H1 (cell line): ENCODE measurements at regions of chr11 and their contacts with region 1.

Region 1: DNA sequence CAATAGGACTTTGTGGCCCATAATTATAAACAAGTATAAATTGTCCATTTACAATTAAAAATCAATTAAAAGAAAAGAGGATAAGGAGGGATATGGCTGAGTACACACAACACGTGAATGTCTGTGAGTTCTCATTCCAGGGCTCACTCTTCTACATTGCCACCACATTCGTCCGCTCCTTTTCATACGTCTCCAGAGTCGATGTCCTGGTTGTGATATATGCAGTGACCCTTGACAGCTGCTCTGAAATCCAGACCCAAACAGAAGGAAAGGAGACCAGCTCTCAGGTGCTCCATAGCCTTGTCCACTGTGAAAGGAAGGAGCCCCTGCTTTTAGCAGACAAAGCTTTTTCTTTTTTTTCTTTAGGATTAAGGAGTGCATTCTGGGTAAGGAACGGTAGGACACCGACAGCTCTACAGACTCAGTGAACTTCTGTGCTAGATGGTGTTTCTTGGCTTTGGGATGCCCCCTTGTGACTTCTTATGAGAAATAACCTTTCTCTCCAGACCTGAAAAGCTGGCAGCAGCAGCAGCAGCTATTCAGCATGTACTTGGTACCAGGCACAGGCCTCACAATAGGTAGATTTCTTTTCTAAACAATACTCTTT is 19.7 kb upstream of the DNAJB13 start:
- DNase-seq: peak; percentile 52 to 53
- H3K4me3 ChIP-seq: no peak overlapping the region
- H3K27ac ChIP-seq: no peak overlapping the region
- H3K4me1 ChIP-seq: peaks cover 0 to 3% (median 1%) of the 10 kb centered on the region in 4 experiments; a peak in 3 of 7 replicates
- H3K27me3 ChIP-seq: no peaks in the 10 kb centered on the region
- CTCF ChIP-seq: peak in 2 of 3 experiments; percentile 81 to 82; a peak in 3 of 4 replicates
- EP300 ChIP-seq: 0 out of 3 replicates have a peak, but pooled peaks of 1 of the 2 experiments have one; percentile 20
- POLR2A ChIP-seq: no peak
- RAD21 ChIP-seq: peak; percentile 92 to 96

Region 2: GRCh38 chr11:73760679-73761402 is 170.3 kb before region 1 on chr11 and contains the start of gene RAB6A:
- CTCF ChIA-PET with region 1: interaction called, 15 read pairs
- POLR2A ChIA-PET with region 1: interaction called, 3 read pairs
- DNase-seq: peak; percentile 100
- H3K4me3 ChIP-seq: peak within 1 kb of the TSS; percentile 92 to 95 (median 94)
- H3K27ac ChIP-seq: peak within 1 kb of the TSS; percentile 82; the same call in 1 of the 2 replicates
- H3K4me1 ChIP-seq: peaks cover 0 to 4% (median 0%) of the 10 kb centered on the region in 4 experiments; a peak in 1 of 7 replicates
- H3K27me3 ChIP-seq: no peaks in the 10 kb centered on the region
- CTCF ChIP-seq: peak; percentile 49 to 57 (median 54)
- EP300 ChIP-seq: no peak; a peak in 1 of 3 replicates
- POLR2A ChIP-seq: peak; percentile 58 to 76
- RAD21 ChIP-seq: peak; percentile 43 to 51; a peak in 3 of 4 replicates
- total RNA-seq, gene RAB6A: 88.6 and 89.3 TPM in 2 replicates

Region 3: DNA sequence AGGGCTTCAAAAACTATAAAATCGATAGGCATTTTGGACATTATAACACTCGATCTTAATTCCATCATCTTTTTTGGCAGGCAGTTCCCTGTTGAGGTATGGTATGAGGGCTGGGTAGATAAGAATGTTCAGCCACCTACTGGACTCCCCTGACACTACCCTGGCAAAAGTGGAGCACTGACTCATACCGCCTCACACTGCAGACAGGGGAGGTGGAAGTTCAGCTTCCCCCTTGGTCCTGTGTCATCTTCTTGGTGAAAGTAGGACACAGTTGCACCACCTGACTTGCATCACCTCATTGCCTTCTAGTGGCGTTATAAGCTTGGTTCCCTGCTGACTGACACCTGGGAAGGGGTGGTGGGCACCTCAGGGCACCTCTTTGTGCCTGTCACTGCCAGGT is 24.0 kb before region 1 on chr11:
- CTCF ChIA-PET with region 1: interaction called, 11 read pairs
- POLR2A ChIA-PET with region 1: no interaction called
- DNase-seq: no peak
- H3K4me3 ChIP-seq: no peak overlapping the region
- H3K27ac ChIP-seq: no peak overlapping the region
- H3K4me1 ChIP-seq: no peaks in the 10 kb centered on the region
- H3K27me3 ChIP-seq: no peaks in the 10 kb centered on the region
- CTCF ChIP-seq: peak; percentile 20 to 37 (median 28)
- EP300 ChIP-seq: no peak
- POLR2A ChIP-seq: no peak
- RAD21 ChIP-seq: peak in 1 of 2 experiments; percentile 40; a peak in 1 of 4 replicates

Region 4: GRCh38 chr11:73942010-73942409 is 10.9 kb after region 1 on chr11:
- CTCF ChIA-PET with region 1: interaction called, 16 read pairs
- POLR2A ChIA-PET with region 1: interaction called, 6 read pairs
- DNase-seq: no peak
- H3K4me3 ChIP-seq: no peak overlapping the region
- H3K27ac ChIP-seq: no peak overlapping the region
- H3K4me1 ChIP-seq: no peaks in the 10 kb centered on the region
- H3K27me3 ChIP-seq: no peaks in the 10 kb centered on the region
- CTCF ChIP-seq: no peak
- EP300 ChIP-seq: no peak
- POLR2A ChIP-seq: no peak
- RAD21 ChIP-seq: no peak